ENCODE measurements at regions of chr11 and their contacts with region 1.

Region 1: DNA sequence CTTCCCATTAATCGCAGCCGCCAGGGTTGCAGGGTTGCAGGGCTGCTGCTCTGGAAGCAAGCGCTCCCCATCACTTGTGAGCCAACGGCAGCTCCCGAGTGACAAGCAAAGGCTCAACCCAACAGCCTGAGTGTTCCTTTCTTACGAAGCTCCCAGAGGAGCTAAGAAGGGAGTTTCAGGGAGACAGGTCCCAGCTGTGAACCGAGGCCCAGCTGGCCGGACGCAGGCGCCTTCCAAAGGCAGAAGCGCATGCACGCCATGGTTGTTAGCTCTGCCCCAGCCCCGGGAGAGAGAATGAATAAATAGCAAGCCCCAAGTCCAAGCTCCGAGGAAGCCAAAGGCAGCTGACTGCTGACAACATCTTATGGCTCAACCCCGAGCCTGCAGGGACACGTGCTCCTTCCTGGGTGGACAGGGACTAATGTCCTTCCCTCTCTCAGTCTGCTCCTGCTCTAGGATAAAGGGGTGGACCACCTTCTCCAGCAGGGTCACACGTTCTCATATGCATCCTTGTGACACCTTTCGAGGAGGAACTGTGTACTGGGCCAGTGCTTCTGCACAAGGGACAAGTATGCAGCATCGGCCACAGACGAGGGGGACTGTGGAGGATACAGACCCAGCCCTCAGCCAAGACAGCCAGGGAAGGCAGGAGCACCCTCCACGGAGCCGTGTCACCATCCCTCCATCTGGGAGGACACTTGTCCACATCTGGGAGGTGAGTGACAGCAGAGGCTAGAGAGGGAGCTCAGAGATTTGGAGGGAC is 29.9 kb downstream of the SHANK2 start:
- DNase-seq: no peak
- H3K4me3 ChIP-seq: no peak overlapping the region
- H3K27ac ChIP-seq: no peak overlapping the region
- H3K4me1 ChIP-seq: no peaks in the 10 kb centered on the region
- H3K27me3 ChIP-seq: no peaks in the 10 kb centered on the region
- CTCF ChIP-seq: no peak
- EP300 ChIP-seq: no peak
- POLR2A ChIP-seq: no peak

Region 2: DNA sequence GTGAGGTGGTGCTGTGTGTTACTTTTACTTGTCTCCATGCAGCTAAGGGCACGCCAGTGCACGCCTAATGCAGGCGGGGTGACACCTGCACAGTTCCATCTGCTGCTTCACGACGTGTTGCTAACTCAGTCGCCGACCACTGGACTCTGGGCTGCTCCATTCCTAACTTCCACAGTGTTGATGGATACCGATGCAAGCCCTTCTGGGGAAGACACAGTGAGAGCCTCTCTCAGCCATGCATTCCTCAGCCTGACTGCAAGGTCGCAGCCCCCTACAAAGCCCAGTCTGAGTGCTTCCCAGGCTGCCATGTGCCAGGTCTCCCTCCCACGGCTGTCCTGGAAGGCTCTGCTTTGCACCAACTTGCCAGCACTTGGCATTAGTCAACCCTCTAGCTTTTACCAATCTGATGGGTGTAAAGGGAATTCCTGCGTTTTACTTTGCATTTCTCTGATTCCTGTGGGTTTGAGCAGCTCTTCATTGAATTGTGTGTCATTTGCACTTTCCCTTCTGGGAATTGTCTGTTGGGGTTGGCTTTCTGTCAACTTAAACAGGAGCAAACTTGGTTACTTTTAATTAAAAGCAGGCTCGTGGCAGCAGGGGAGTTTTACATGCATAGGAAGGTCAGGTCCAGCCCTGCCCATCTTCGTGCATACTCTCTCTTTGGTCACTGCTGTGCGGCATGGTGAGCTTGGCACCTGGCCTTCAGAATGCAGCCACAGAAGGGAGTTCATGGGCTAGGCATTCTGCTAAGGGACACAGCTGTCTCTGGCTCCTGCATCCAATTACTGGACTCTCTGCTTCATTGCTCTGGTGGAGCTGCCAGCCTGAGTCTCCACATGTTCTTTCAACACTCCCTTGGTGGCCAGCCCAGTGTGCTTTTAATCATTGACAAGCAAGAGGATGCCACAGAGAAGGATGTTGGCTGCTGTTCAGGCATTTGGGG is 64.5 kb after region 1 on chr11:
- intact Hi-C with region 1: loop called in 1 of 4 experiments (anchors 10 kb)
- DNase-seq: no peak
- H3K4me3 ChIP-seq: no peak overlapping the region
- H3K27ac ChIP-seq: no peak overlapping the region
- H3K4me1 ChIP-seq: no peaks in the 10 kb centered on the region
- H3K27me3 ChIP-seq: no peaks in the 10 kb centered on the region
- CTCF ChIP-seq: no peak
- EP300 ChIP-seq: no peak
- POLR2A ChIP-seq: no peak